ENCODE measurements at regions of chr3 and their contacts with region 1.

Region 1: GRCh38 chr3:125437631-125438435 is 62.7 kb upstream of the ZNF148 start:
- DNase-seq: peak; percentile 83

Region 2: DNA sequence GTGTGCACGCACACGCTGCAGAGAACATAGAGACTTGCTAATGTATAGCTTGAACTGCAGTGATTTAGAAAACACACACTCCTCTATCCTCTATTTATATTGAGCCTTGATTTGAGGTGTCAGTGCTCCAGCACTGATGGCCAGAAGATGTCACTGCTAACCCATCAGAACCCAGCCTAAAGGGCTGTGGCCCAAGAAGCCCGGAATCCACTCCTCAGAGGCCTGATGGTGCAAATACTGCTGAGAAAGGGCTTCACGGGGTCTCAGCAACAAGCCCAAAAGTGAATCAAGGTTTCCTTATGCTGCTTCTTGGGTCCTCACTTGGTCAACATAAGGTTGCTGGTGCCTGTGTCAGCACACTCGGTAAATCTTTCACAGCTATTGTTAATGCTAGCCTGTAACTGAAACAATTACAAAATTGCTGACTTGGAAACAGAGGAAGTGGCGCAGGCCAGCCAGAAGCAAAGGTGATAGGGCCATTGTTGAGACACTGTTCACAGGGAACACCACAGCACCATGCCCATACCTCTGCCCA is 442.3 kb before region 1 on chr3:
- intact Hi-C with region 1: loop called in 1 of 2 experiments (anchors 10 kb)
- DNase-seq: no peak

Region 3: DNA sequence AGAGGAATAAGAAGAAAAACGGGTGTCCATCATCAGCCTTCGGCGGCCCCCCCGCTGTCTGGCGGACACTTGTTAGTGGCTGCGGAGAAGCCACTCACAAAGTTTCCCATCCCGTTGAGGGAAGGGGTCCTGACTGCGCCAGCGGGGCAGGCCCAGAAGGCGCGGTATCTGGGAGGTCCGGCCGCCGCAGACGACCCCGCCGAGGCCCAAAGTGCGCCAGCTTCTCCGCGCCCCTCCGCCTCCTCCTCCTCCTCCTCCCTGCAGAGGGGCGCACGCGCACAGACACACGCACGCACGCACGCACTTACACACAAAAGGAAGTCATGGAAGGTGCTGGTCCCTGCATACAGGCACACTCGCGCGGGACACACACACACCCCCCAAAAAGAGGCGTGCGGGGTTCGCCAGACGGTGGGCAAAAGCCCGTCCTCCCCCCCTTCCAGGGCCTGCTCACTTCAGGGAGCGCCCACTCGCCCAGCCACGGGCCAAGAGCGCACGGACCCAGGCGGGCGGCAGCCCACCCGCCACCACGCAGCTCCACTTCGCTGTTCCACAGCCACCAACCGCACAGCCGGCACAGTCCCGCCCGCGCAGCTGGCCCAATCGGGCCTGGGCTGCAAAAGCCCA is 80.7 kb before region 1 on chr3:
- intact Hi-C with region 1: no loop called
- DNase-seq: peak; percentile 85

Region 4: DNA sequence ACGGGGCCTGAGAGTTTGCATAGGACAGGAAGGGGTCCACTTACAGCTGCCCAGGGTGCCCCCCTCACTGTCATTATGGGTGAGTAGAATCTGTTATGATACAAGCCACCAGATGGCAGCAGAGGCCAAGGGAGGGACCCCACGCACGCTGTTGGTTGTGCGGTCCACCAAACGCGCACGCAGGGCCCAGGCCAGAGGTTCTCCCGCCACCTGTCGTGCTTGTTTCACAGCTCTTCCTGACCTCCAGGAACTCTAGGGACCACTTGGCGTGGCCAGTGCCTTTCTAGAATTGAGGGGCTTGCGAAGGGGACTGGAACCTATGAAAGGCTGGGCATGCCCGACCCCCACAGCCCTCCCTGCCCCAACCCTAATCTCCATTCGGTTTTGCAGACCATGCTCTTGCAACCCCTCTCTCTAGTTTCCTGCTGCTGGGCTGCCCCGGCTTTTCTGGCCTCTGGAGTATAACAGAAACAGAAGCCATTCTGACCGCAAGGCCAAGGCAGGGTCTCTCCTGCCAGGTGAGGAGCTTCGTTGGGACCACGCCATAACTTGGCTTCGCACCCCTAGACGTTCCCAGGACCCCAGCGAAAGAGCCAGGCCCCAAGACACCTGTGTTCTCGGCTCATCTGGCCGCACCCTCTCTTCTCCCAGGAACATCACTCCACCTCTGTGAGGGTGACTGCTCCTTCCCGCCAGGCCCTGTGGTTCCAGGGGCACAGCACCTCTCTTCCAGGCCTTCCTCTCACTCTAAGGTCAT is 696.6 kb after region 1 on chr3:
- intact Hi-C with region 1: no loop called
- DNase-seq: peak; percentile 88

Measured in posterior vena cava (tissue), 2 donors.